ENCODE measurements at regions of chrX and their contacts with region 1.

Region 1: DNA sequence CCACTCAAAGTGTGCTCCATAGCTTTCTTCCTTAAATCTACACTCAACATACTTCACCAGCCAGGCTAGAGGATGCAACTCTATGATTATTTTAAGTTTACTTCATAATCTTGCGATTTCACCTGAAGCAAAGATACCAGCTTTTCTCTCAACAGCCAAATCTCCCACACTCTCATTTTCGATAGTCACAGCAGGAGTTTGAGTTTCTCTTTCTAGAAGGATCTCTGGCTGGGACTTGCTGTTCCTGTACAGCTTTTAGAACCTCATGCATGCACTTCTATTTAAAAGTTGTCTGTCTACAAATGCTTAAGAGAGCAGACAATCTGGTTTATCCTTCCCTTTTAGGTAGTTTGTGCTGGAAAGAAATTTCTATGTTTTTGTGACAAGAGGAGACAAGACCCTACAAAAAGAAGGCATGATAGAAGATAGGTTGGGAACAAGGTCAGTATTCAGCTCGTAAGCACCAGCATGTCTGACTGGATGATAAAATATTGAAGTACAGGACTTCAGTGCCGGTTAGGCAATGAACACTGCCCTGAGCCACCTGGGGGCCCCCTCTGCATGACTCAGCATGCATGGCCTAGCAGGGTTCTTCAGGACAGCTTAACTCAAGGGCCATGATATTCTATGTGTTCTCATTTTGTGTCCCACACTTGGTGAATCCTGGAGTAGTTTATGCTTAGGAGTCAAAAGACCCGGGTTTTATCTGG is 65.6 kb downstream of the ATXN3L start:
- DNase-seq: no peak
- ATAC-seq: no peak
- H3K4me3 ChIP-seq: no peak overlapping the region
- H3K4me3 Mint-ChIP-seq: peak overlapping the region in 1 of 10 donors; percentile 22
- H3K27ac ChIP-seq: no peak overlapping the region
- H3K27ac Mint-ChIP-seq: peak overlapping the region in 1 of 9 donors; percentile 47
- H3K4me1 ChIP-seq: peaks cover 0 to 10% of the 10 kb centered on the region in 2 donors
- H3K4me1 Mint-ChIP-seq: peaks cover 0 to 45% (median 20%) of the 10 kb centered on the region in 7 donors
- H3K27me3 ChIP-seq: no peaks in the 10 kb centered on the region
- H3K27me3 Mint-ChIP-seq: no peaks in the 10 kb centered on the region

Region 2: GRCh38 chrX:13123857-13124345 is 130.3 kb before region 1 on chrX:
- CTCF ChIA-PET with region 1: no interaction called
- POLR2A ChIA-PET with region 1: no interaction called
- intact Hi-C with region 1: loop called in 1 of 2 experiments (anchors 10 kb)
- DNase-seq: peak in 4 of 9 donors; percentile 14 to 33 (median 24)
- ATAC-seq: peak; percentile 29
- H3K4me3 ChIP-seq: peak overlapping the region; percentile 29
- H3K4me3 Mint-ChIP-seq: peak overlapping the region; percentile 18 to 76 (median 66)
- H3K27ac ChIP-seq: peak overlapping the region; percentile 52
- H3K27ac Mint-ChIP-seq: peak overlapping the region; percentile 84 to 95 (median 91)
- H3K4me1 ChIP-seq: peaks cover 19 to 25% of the 10 kb centered on the region in 2 donors
- H3K4me1 Mint-ChIP-seq: peaks cover 5 to 65% (median 48%) of the 10 kb centered on the region in 7 donors
- H3K27me3 ChIP-seq: no peaks in the 10 kb centered on the region
- H3K27me3 Mint-ChIP-seq: no peaks in the 10 kb centered on the region

Region 3: DNA sequence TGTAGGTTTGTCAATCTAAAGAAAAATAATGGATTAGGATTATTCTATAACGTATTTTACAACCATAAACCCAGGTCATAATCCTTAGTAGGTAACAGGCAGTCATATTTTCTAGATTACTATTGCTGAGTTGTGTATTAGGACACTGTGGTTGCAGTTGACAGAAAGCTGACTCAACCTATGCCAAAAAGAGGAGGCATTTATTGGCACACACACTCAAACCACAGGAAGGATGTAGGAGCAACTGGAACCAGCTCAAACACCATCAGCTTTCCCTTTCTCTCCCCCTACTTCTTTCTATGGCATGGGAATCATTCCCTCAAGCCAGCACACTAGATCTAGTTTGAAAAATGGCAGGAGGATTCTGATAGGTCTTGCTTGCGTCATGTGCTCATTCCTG is 73.4 kb before region 1 on chrX:
- CTCF ChIA-PET with region 1: no interaction called
- POLR2A ChIA-PET with region 1: no interaction called
- intact Hi-C with region 1: loop called in 1 of 2 experiments (anchors 10 kb)
- DNase-seq: no peak
- ATAC-seq: no peak
- H3K4me3 ChIP-seq: no peak overlapping the region
- H3K4me3 Mint-ChIP-seq: no peak overlapping the region
- H3K27ac ChIP-seq: no peak overlapping the region
- H3K27ac Mint-ChIP-seq: peak overlapping the region in 1 of 9 donors; percentile 52
- H3K4me1 ChIP-seq: peaks cover 0 to 10% of the 10 kb centered on the region in 2 donors
- H3K4me1 Mint-ChIP-seq: peaks cover 0 to 11% (median 10%) of the 10 kb centered on the region in 7 donors
- H3K27me3 ChIP-seq: no peaks in the 10 kb centered on the region
- H3K27me3 Mint-ChIP-seq: no peaks in the 10 kb centered on the region

Region 4: GRCh38 chrX:13220916-13221315 is 33.3 kb before region 1 on chrX:
- CTCF ChIA-PET with region 1: no interaction called
- POLR2A ChIA-PET with region 1: no interaction called
- intact Hi-C with region 1: no loop called
- DNase-seq: no peak
- ATAC-seq: no peak
- H3K4me3 ChIP-seq: no peak overlapping the region
- H3K4me3 Mint-ChIP-seq: no peak overlapping the region
- H3K27ac ChIP-seq: no peak overlapping the region
- H3K27ac Mint-ChIP-seq: no peak overlapping the region
- H3K4me1 ChIP-seq: no peaks in the 10 kb centered on the region
- H3K4me1 Mint-ChIP-seq: peaks cover 0 to 10% (median 6%) of the 10 kb centered on the region in 7 donors
- H3K27me3 ChIP-seq: no peaks in the 10 kb centered on the region
- H3K27me3 Mint-ChIP-seq: peaks cover 0 to 4% (median 4%) of the 10 kb centered on the region in 5 donors

Measured in naive thymus-derived CD4-positive, alpha-beta T cell (primary cell).